ENCODE measurements at regions of chr2 and their contacts with region 1.

Region 1: GRCh38 chr2:178142274-178143065 is 30.2 kb downstream of the RBM45 start:
- ATAC-seq: peak in 1 of 8 experiments; percentile 52
- H3K4me3 ChIP-seq: no peak overlapping the region
- H3K27ac ChIP-seq: no peak overlapping the region
- H3K4me1 ChIP-seq: no peaks in the 10 kb centered on the region

Region 2: DNA sequence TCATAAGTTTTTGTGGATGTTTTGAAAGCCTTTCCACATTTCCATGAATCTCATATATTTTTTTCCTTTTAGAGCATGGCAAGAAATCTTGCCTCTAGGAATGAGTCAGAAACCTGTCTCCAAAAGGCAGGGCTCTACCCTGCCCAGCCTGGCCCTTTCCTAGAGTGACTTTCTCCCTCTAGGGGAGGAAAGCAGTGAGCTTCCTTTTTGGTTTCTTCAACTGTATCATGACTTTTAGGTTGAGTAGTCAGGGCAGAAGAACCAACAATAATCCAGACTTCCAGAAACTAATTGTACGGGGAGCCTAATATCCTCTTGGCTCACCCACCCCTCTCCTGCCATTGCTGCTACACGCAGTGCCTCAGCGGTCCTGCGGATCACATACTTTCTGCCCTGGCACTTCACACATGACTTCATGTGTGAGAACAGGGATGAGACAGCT is 449.6 kb before region 1 on chr2:
- in situ Hi-C with region 1: no loop called
- ATAC-seq: peak in 3 of 8 experiments; percentile 83 to 93 (median 89)
- H3K4me3 ChIP-seq: no peak overlapping the region
- H3K27ac ChIP-seq: no peak overlapping the region
- H3K4me1 ChIP-seq: peaks cover 3 to 15% of the 10 kb centered on the region in 2 donors

Region 3: DNA sequence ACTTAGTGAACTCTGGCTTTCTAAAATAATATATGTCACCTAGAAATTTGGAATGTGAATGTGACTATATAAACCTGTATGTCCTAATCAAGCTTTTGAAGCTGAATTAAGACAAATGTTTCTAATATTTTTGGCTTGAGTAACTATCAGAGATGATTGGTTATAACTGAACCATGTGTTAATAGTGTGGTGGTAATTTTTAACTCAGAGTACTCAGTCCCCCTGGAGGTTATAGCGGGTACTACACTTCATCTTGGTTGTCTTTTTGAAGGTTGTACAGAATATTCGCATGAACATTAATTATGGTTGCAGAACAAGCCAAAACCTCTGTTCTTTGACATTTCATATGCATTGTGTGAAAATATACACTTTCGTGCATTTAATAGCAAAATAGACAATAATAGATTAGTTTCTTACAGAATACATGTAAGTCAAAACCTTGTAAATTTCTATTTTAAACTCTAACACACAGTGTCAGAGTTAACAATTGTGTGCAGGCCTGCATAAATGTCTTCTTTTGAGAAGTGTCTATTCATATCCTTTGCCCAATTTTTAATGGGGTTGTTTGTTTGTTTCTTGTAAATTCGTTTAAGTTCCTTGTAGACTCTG is 137.9 kb after region 1 on chr2:
- in situ Hi-C with region 1: loop called in 1 of 9 experiments (anchors 25 kb)
- ATAC-seq: peak in 1 of 8 experiments; percentile 11
- H3K4me3 ChIP-seq: no peak overlapping the region
- H3K27ac ChIP-seq: no peak overlapping the region
- H3K4me1 ChIP-seq: peaks cover 0 to 2% of the 10 kb centered on the region in 2 donors

Region 4: GRCh38 chr2:178397002-178397605 is 254.6 kb after region 1 on chr2:
- in situ Hi-C with region 1: loop called in 5 of 9 experiments (anchors 25 kb)
- ATAC-seq: peak; percentile 50 to 81 (median 69)
- H3K4me3 ChIP-seq: no peak overlapping the region
- H3K27ac ChIP-seq: no peak overlapping the region
- H3K4me1 ChIP-seq: peaks cover 0 to 6% of the 10 kb centered on the region in 2 donors

Region 5: DNA sequence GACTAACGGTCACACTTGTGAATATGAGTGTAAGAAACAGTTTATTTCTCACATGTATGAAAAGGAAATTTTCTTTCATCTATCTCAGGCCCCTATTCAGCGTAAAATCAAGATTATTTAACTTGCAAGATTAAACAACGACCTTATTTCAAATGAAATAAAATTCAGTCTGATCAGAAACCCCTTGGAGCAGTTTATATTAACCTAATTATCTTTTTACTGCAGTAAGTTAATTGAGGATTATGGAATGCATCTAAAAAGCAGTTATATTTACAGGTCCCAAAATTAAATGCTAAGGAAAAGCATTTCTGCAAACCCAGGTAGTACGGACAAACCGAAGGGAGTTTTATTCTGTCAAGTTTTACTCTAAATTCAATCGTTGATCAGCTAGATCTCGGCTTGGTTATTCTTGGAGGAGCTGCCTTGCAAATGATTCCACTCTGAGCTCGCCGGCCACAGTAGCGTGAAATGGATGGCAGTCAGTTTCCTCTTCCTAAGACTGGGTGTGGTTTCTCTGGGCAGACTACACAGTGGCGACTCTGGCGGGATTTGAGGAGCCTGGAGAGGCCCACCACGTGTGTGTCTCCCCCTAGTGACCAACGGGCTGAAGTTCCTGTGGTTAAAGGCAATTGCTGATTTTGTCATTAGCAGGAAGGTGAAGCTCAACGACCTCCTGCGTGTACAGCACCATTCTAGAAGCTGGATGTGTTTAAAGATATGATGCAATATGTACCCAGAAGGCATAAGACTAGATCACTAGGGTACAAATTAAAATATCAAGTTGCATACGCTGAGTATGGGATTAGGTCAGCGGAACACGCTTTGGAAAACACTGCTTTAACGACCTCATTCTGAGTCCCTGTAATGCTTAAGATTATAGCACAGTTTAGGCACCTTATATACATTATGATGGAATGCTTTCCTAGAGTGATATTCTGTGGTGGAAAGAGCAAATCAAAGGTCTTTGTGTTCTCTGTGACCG is 272.1 kb after region 1 on chr2:
- in situ Hi-C with region 1: loop called in 4 of 9 experiments (anchors 25 kb)
- ATAC-seq: peak; percentile 74 to 93 (median 90)
- H3K4me3 ChIP-seq: peak overlapping the region; percentile 47 to 80 (median 52)
- H3K27ac ChIP-seq: peak overlapping the region; percentile 94 to 95
- H3K4me1 ChIP-seq: peaks cover 0 to 9% of the 10 kb centered on the region in 2 donors

Region 6: DNA sequence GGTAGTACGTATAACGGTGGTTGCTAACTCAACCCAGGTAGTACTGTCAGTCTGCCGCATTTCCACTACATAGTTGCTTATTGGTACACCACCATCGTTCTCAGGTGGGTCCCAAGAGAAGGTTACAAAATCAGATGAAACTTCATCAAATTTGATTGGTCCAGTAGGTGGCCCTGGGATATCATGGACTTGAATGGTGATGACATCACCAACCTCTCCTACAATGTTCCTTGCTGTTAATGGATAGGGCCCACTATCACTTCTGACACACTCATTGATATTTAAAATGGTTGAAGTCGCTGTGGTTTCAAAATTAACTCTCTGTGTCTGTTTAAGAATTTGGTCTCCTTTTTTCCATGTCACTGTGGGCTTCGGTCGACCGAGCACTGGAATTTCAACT is 432.3 kb after region 1 on chr2:
- in situ Hi-C with region 1: no loop called
- ATAC-seq: no peak
- H3K4me3 ChIP-seq: no peak overlapping the region
- H3K27ac ChIP-seq: no peak overlapping the region
- H3K4me1 ChIP-seq: no peaks in the 10 kb centered on the region

Measured in motor neuron (in vitro differentiated cells).